ENCODE measurements at regions of chr12 and their contacts with region 1.

Region 1: GRCh38 chr12:109512608-109513007 is 35.2 kb downstream of the UBE3B start:
- DNase-seq: no peak
- H3K4me3 ChIP-seq: no peak overlapping the region
- H3K27ac ChIP-seq: no peak overlapping the region
- H3K4me1 ChIP-seq: no peaks in the 10 kb centered on the region
- H3K27me3 ChIP-seq: no peaks in the 10 kb centered on the region
- CTCF ChIP-seq: no peak
- POLR2A ChIP-seq: no peak

Region 2: DNA sequence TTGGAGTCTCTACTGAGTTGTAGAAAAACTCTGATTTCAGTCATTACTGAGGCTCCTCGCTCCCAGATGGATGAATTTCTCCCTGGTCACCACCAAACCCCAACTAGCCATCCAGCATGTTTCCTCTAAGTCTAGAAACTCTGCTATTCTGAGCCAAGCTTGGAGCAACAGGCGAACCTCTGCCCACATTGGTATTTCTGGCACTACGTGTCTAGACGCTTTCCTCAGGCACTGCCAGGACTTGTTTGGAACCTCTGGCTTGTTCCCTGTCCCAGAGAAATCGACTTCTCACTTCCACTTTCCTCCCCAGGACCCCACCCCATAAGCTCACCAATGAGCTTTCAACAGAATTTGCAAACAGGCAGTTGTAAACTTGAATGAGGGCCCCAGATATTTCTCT is 1355.9 kb before region 1 on chr12:
- intact Hi-C with region 1: no loop called
- DNase-seq: peak in 1 of 2 donors; percentile 43
- H3K4me3 ChIP-seq: no peak overlapping the region
- H3K27ac ChIP-seq: no peak overlapping the region
- H3K4me1 ChIP-seq: no peaks in the 10 kb centered on the region
- H3K27me3 ChIP-seq: peaks cover 0 to 10% of the 10 kb centered on the region in 2 donors
- CTCF ChIP-seq: no peak
- POLR2A ChIP-seq: no peak

Region 3: GRCh38 chr12:109443794-109444193 is 68.8 kb before region 1 on chr12:
- intact Hi-C with region 1: loop called (anchors 2 kb)
- DNase-seq: no peak
- H3K4me3 ChIP-seq: no peak overlapping the region
- H3K27ac ChIP-seq: peak overlapping the region; percentile 17 to 67
- H3K4me1 ChIP-seq: peaks cover 0 to 2% of the 10 kb centered on the region in 2 donors
- H3K27me3 ChIP-seq: no peaks in the 10 kb centered on the region
- CTCF ChIP-seq: no peak
- POLR2A ChIP-seq: no peak

Region 4: GRCh38 chr12:109544955-109545531 is 32.4 kb after region 1 on chr12:
- intact Hi-C with region 1: no loop called
- DNase-seq: no peak
- H3K4me3 ChIP-seq: no peak overlapping the region
- H3K27ac ChIP-seq: peak overlapping the region; percentile 21 to 43
- H3K4me1 ChIP-seq: no peaks in the 10 kb centered on the region
- H3K27me3 ChIP-seq: peaks cover 0 to 16% of the 10 kb centered on the region in 2 donors
- CTCF ChIP-seq: no peak
- POLR2A ChIP-seq: no peak

Region 5: DNA sequence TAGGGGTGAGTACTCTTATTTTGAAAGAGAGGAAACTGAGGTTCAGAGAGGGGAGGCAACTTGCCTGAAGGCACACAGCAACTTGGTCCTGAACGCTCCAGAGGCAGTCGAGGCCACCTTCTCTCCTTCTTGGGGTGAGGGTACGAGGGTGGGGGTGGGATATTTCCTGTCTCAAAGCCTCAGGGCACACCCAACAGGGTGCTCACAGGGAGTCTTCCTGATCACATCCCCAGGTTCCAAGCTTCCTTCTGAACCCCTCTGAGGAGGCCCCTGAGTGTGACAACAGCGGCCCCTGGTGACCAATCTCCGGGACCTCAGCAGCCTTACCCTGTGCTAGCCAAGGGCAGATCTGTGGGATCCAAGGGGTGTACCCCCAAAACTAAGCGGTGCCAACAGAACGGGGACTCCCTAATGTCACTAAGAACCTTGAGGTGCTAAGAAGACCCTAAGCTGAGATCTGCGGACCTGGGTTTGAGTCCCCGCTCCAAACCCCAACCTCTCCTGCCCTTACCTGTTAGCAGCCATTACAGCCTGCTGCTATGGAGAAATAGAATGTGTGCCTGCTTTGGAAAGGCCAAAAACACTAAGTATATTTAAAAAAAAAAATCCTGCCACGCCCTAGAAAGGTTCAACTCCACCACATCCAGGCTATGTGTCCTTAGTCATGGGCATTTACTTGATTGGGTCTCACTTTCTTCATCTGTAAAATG is 262.7 kb after region 1 on chr12:
- intact Hi-C with region 1: loop called (anchors 5 kb)
- DNase-seq: peak; percentile 58 to 79
- H3K4me3 ChIP-seq: no peak overlapping the region
- H3K27ac ChIP-seq: no peak overlapping the region
- H3K4me1 ChIP-seq: no peaks in the 10 kb centered on the region
- H3K27me3 ChIP-seq: no peaks in the 10 kb centered on the region
- CTCF ChIP-seq: peak; percentile 43 to 86 (median 77)
- POLR2A ChIP-seq: no peak